ENCODE measurements at regions of chr9 and their contacts with region 1.

Region 1: DNA sequence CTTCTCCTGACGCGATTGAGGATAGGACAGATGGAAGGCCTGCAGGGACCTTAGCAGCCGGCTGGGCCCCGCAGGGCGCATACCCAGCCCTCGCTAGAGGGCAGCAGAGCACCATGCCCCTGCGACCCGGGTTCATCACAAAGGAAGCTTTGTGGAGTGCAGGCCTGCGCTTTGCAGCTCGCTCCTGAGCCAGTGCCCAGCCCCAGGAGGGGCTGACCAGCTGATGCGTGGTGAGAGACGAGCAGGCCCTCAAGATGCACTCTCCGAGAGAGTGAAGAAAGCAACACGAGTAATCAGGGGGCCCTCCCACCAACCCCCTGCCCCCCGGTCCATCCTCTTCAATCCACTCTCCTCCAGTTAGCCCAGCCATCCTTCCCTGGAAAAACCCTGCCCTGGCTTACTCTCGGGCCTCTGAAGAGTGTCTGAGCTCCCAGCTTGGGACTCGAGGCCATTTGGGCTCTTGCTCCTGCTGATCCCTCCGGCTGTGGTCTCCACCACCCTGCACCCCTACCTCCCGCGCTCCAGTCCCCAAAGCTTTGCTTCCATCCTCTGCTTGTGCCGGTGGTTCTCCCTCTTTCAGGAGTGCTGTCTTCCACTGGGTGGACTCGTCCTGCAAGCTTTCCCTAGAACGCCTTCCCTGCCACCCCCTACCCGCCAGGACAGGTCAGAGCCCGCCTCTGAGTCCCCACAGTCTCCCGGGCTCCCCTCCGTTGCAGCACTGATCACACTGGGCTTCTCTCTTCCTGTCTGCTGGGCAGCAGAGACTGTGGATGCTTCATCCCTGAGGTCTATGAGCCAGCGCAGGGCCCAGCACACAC is 9.1 kb upstream of the KIF12 start:
- DNase-seq: peak; percentile 83 to 91
- ATAC-seq: peak; percentile 97 to 99
- H3K4me3 ChIP-seq: no peak overlapping the region
- H3K27ac ChIP-seq: peak overlapping the region; percentile 39 to 73; a peak in 5 of 6 replicates
- H3K4me1 ChIP-seq: peaks cover 38% of the 10 kb centered on the region
- CTCF ChIP-seq: peak; percentile 92
- EP300 ChIP-seq: no peak
- POLR2A ChIP-seq: no peak
- RAD21 ChIP-seq: peak; percentile 97

Region 2: GRCh38 chr9:114047717-114048116 is 60.5 kb before region 1 on chr9:
- CTCF ChIA-PET with region 1: no interaction called
- POLR2A ChIA-PET with region 1: no interaction called
- DNase-seq: peak; percentile 13 to 31
- ATAC-seq: peak in 1 of 2 experiments; percentile 73; a peak in 2 of 6 replicates
- H3K4me3 ChIP-seq: no peak overlapping the region
- H3K27ac ChIP-seq: no peak overlapping the region
- H3K4me1 ChIP-seq: no peaks in the 10 kb centered on the region
- CTCF ChIP-seq: no peak
- EP300 ChIP-seq: no peak
- POLR2A ChIP-seq: no peak
- RAD21 ChIP-seq: peak in 1 of 2 experiments; percentile 45; a peak in 2 of 5 replicates

Region 3: GRCh38 chr9:114131808-114132549 is 23.8 kb after region 1 on chr9:
- CTCF ChIA-PET with region 1: interaction called, 96 read pairs
- POLR2A ChIA-PET with region 1: no interaction called
- DNase-seq: no peak
- ATAC-seq: no peak
- H3K4me3 ChIP-seq: no peak overlapping the region
- H3K27ac ChIP-seq: no peak overlapping the region
- H3K4me1 ChIP-seq: no peaks in the 10 kb centered on the region
- CTCF ChIP-seq: no peak
- EP300 ChIP-seq: no peak
- POLR2A ChIP-seq: no peak
- RAD21 ChIP-seq: no peak

Region 4: DNA sequence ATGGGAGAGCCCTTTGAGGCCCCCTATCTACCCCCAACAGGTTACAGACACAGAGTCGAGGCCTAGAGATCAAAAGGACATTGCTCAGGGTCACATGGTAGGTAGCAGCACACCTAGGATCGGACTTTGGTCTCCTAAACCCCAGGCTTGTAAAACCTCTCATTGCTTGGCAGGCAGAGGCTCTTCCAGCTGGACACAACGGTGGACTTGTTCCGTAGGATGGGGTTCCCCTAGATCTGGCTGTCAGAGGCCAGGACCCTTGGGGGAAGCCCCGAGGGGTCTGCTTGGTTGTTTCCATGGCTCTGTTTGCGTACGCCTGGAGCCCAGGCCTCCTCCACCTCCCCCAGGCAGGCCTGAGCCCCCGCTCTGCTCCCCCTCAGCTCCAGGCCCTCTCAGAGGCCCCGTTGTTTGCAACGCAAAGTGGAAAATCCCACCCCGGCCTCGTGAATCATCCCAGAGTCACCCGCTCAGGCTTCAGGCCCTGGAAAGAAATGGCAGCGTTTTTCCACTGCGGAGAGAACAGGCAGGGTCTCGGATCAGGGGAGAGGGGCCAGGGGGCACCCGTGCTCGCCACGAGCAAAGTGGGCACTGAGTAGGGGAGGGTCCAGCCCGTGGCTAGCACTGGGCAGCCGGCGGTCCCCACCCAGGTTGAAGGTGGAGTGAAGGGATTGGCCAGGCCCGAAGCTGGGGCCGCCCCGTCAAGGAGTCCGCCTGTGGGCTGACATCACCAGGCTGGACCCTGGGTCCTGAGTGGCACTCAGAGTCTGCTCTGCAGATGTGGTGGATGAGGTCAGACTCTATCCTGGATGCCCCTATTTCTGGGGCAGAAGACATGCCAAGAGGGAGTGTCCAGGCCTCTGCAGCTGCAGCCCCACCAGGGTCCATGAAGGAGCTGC is 66.9 kb after region 1 on chr9:
- CTCF ChIA-PET with region 1: interaction called, 10 read pairs
- POLR2A ChIA-PET with region 1: no interaction called
- DNase-seq: no peak
- ATAC-seq: peak in 1 of 2 experiments; percentile 27; a peak in 3 of 6 replicates
- H3K4me3 ChIP-seq: no peak overlapping the region
- H3K27ac ChIP-seq: peak overlapping the region in 1 of 2 experiments; percentile 32; a peak in 1 of 6 replicates
- H3K4me1 ChIP-seq: peaks cover 30% of the 10 kb centered on the region
- CTCF ChIP-seq: no peak
- EP300 ChIP-seq: no peak
- POLR2A ChIP-seq: no peak
- RAD21 ChIP-seq: no peak

Region 5: GRCh38 chr9:114238891-114239875 is 131.0 kb after region 1 on chr9:
- CTCF ChIA-PET with region 1: interaction called, 24 read pairs
- POLR2A ChIA-PET with region 1: no interaction called
- DNase-seq: peak; percentile 21 to 28
- ATAC-seq: peak in 1 of 2 experiments; percentile 57; a peak in 3 of 6 replicates
- H3K4me3 ChIP-seq: no peak overlapping the region
- H3K27ac ChIP-seq: no peak overlapping the region
- H3K4me1 ChIP-seq: no peaks in the 10 kb centered on the region
- CTCF ChIP-seq: no peak
- EP300 ChIP-seq: no peak
- POLR2A ChIP-seq: no peak
- RAD21 ChIP-seq: peak; percentile 10 to 31; a peak in 2 of 5 replicates

Region 6: DNA sequence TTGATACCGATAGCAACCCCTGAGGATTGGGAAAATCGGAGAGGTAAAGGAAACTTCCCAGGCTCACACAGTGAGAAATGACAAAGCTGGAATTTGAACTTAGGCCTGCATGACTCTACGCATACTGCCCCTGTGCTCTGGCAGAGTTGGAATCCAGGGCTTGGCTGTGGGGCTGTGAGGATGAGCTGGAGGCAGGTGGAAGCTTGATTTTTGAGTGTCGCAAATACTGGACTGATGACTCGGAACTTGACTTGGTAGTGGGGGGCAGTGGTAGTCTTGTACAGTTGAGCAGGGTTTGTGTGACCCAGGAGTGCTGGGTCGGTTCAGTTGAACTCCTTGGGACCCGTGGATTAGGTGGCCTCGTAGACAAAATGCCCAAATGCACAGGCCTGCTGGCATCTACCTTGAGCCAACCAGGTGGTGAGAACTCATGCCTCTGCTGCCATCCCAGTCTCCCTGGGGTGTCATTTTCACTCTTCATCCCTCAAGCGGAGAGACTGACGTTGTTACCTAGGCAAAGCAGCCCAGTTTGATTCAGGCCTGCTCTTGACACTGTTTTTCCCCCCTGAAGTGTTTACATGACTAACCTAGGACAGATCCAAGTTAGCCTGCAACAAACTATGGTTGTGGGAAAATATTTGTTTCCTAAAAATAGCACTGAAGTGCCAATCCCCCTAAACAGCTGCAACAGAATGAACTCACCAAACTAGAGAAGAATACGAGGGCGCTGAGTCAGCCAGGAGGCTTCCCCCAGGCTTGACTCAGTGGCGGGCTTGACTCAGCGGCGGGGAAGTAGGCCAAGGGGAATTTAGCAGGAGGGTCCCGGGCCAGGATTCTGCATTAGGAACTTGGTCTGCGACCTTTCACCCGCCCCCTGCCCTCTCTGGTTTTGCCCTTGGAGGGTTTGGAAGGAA is 168.9 kb after region 1 on chr9:
- CTCF ChIA-PET with region 1: interaction called, 37 read pairs
- POLR2A ChIA-PET with region 1: no interaction called
- DNase-seq: no peak
- ATAC-seq: no peak
- H3K4me3 ChIP-seq: no peak overlapping the region
- H3K27ac ChIP-seq: peak overlapping the region; percentile 86 to 94
- H3K4me1 ChIP-seq: peaks cover 55% of the 10 kb centered on the region
- CTCF ChIP-seq: no peak
- EP300 ChIP-seq: no peak
- POLR2A ChIP-seq: no peak
- RAD21 ChIP-seq: no peak

Region 7: GRCh38 chr9:114405294-114406034 is 297.2 kb after region 1 on chr9:
- CTCF ChIA-PET with region 1: interaction called, 11 read pairs
- POLR2A ChIA-PET with region 1: no interaction called
- DNase-seq: peak; percentile 78 to 90
- ATAC-seq: peak; percentile 87 to 98
- H3K4me3 ChIP-seq: no peak overlapping the region
- H3K27ac ChIP-seq: no peak overlapping the region
- H3K4me1 ChIP-seq: no peaks in the 10 kb centered on the region
- CTCF ChIP-seq: peak; percentile 84
- EP300 ChIP-seq: no peak
- POLR2A ChIP-seq: no peak
- RAD21 ChIP-seq: peak; percentile 93 to 95